ENCODE measurements at regions of chr11 and their contacts with region 1.

Region 1: GRCh38 chr11:59158206-59159068 is 13.5 kb upstream of the DTX4 start:
- DNase-seq: peak; percentile 85
- ATAC-seq: peak; percentile 93
- H3K4me3 ChIP-seq: no peak overlapping the region
- H3K27ac ChIP-seq: no peak overlapping the region
- H3K4me1 ChIP-seq: no peaks in the 10 kb centered on the region
- H3K27me3 ChIP-seq: peaks cover 29% of the 10 kb centered on the region
- CTCF ChIP-seq: peak; percentile 94

Region 2: GRCh38 chr11:58654079-58654907 is 504.1 kb before region 1 on chr11:
- CTCF ChIA-PET with region 1: no interaction called
- POLR2A ChIA-PET with region 1: no interaction called
- intact Hi-C with region 1: loop called (anchors 1 kb)
- DNase-seq: peak; percentile 91
- ATAC-seq: peak; percentile 96
- H3K4me3 ChIP-seq: no peak overlapping the region
- H3K27ac ChIP-seq: no peak overlapping the region
- H3K4me1 ChIP-seq: peaks cover 29% of the 10 kb centered on the region
- H3K27me3 ChIP-seq: no peaks in the 10 kb centered on the region
- CTCF ChIP-seq: peak; percentile 99

Region 3: DNA sequence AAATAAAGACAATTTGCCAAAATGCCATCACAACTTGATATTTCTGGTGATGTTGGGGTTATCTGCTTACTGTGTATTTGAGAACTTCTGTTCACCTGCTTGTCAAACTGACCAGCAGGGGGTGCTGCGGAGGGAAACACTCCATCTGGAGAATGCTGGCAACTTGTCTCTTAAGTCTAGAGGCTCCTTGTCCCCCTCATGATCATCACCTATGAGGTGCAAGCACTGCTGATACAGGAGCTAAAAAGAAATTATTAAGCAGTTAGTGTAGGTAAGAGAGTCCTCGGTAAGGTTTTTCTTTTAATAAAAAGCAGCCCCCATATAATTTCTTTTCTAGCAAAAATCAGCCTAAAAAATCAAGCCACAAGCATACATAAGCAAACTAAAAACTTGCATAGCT is 105.0 kb before region 1 on chr11:
- CTCF ChIA-PET with region 1: interaction called, 4 read pairs
- POLR2A ChIA-PET with region 1: no interaction called
- intact Hi-C with region 1: loop called (anchors 1 kb)
- DNase-seq: peak; percentile 75
- ATAC-seq: peak; percentile 51; the same call in 1 of the 2 replicates
- H3K4me3 ChIP-seq: no peak overlapping the region
- H3K27ac ChIP-seq: no peak overlapping the region
- H3K4me1 ChIP-seq: peaks cover 7% of the 10 kb centered on the region; the same call in 1 of the 2 replicates
- H3K27me3 ChIP-seq: peaks cover 48% of the 10 kb centered on the region
- CTCF ChIP-seq: peak; percentile 85

Region 4: GRCh38 chr11:59097113-59097708 is 61.2 kb before region 1 on chr11:
- CTCF ChIA-PET with region 1: no interaction called
- POLR2A ChIA-PET with region 1: no interaction called
- intact Hi-C with region 1: loop called (anchors 1 kb)
- DNase-seq: peak; percentile 75
- ATAC-seq: peak; percentile 74
- H3K4me3 ChIP-seq: no peak overlapping the region
- H3K27ac ChIP-seq: no peak overlapping the region
- H3K4me1 ChIP-seq: no peaks in the 10 kb centered on the region
- H3K27me3 ChIP-seq: 0 out of 2 replicates have a peak, but pooled peaks cover 18% of the 10 kb centered on the region
- CTCF ChIP-seq: peak; percentile 72

Region 5: GRCh38 chr11:59142530-59143507 is 15.6 kb before region 1 on chr11 and contains the start of gene FAM111A:
- CTCF ChIA-PET with region 1: interaction called, 13 read pairs
- POLR2A ChIA-PET with region 1: no interaction called
- intact Hi-C with region 1: loop called (anchors 1 kb)
- DNase-seq: peak; percentile 96
- ATAC-seq: peak; percentile 77
- H3K4me3 ChIP-seq: peak within 1 kb of the TSS; percentile 79
- H3K27ac ChIP-seq: peak within 1 kb of the TSS; percentile 68
- H3K4me1 ChIP-seq: peaks cover 38% of the 10 kb centered on the region
- H3K27me3 ChIP-seq: no peaks in the 10 kb centered on the region
- CTCF ChIP-seq: peak; percentile 49
- total RNA-seq, gene FAM111A: 38.9 and 49.2 TPM in 2 replicates

Region 6: GRCh38 chr11:59171508-59172322 is 13.3 kb after region 1 on chr11 and contains the start of gene DTX4:
- CTCF ChIA-PET with region 1: interaction called, 10 read pairs
- POLR2A ChIA-PET with region 1: no interaction called
- intact Hi-C with region 1: no loop called
- DNase-seq: peak; percentile 93
- ATAC-seq: peak; percentile 89
- H3K4me3 ChIP-seq: peak within 1 kb of the TSS; percentile 78
- H3K27ac ChIP-seq: no peak within 1 kb of the TSS
- H3K4me1 ChIP-seq: peaks cover 37% of the 10 kb centered on the region
- H3K27me3 ChIP-seq: peaks cover 27% of the 10 kb centered on the region
- CTCF ChIP-seq: peak; percentile 84
- total RNA-seq, gene DTX4: 4.0 and 4.9 TPM in 2 replicates

Region 7: GRCh38 chr11:59380263-59381059 is 222.0 kb after region 1 on chr11:
- CTCF ChIA-PET with region 1: no interaction called
- POLR2A ChIA-PET with region 1: no interaction called
- intact Hi-C with region 1: no loop called
- DNase-seq: no peak
- ATAC-seq: no peak
- H3K4me3 ChIP-seq: no peak overlapping the region
- H3K27ac ChIP-seq: no peak overlapping the region
- H3K4me1 ChIP-seq: no peaks in the 10 kb centered on the region
- H3K27me3 ChIP-seq: no peaks in the 10 kb centered on the region
- CTCF ChIP-seq: no peak